PC-3 (cell line): ENCODE measurements at regions of chr13 and their contacts with region 1.

Region 1: DNA sequence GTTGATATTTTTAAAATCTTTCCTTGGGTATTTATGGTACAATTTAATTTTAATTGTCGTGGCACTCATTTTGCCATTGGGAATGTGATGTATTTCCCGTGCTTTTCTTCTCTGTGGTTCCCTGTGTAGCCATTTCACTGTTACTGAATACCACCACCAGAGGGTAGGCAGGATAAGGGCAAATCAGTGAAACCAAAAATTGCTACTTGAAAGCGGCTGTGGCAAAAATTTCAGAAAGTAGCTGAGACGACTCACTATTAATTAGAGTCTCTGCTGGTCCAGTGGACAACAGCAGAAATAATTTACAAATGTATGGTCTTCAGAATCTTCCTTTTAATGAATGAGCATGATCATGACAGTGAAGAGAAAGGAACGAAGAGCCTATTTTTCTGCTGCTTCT is 34.4 kb upstream of the MIR17HG start:
- DNase-seq: peak; percentile 22
- ATAC-seq: peak; percentile 49; the same call in 1 of the 2 replicates
- H3K4me3 ChIP-seq: no peak overlapping the region
- H3K27ac ChIP-seq: no peak overlapping the region
- H3K4me1 ChIP-seq: no peaks in the 10 kb centered on the region
- H3K27me3 ChIP-seq: peaks cover 55% of the 10 kb centered on the region
- CTCF ChIP-seq: peak; percentile 38; the same call in 1 of the 2 replicates

Region 2: DNA sequence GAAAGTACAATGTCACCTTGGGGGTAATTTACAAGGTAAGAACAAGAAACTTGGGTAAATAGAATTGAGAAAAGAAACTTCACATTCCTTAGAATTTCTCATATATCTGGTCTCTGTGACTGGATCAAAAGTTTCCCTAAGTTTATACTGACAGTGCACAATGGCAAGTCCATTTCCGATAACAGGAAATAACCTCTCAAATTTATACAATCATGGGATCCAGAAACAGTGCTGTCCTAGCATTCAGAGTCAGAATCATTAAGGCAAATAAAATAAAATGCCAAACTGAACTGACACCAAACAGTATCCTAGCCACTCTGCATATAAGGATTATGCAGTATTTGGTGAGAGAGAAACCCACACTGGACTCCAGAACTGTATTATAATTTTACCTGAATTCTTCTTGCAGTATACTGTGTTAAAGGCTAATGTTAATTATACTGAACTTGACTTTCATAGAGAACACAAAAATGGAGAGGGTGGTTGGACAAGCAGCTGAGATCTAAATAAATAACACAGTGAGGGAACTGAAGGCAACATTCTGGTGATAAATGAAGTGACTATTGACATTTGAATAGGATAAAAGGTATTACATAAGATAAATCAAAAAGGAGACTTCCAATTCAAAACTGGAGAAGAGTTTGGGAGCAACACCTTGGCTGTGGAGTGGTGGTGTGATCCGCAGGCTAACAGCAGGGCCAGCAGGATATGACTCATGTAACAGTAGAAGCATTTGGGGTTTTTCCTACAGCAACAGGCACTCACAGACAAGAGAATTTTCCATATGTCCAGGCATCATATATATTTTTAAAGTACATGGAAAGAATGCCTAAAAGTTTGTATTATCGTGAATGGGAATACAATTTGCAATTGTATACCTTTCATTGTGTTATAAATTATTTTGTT is 898.2 kb before region 1 on chr13:
- CTCF ChIA-PET with region 1: no interaction called
- POLR2A ChIA-PET with region 1: no interaction called
- intact Hi-C with region 1: no loop called
- DNase-seq: peak; percentile 47
- ATAC-seq: peak; percentile 97
- H3K4me3 ChIP-seq: no peak overlapping the region
- H3K27ac ChIP-seq: peak overlapping the region; percentile 45
- H3K4me1 ChIP-seq: peaks cover 16% of the 10 kb centered on the region
- H3K27me3 ChIP-seq: no peaks in the 10 kb centered on the region
- CTCF ChIP-seq: no peak

Region 3: GRCh38 chr13:91348906-91349435 is 35.9 kb after region 1 on chr13:
- CTCF ChIA-PET with region 1: no interaction called
- POLR2A ChIA-PET with region 1: no interaction called
- intact Hi-C with region 1: loop called (anchors 5 kb)
- DNase-seq: peak; percentile 83
- ATAC-seq: peak; percentile 50
- H3K4me3 ChIP-seq: peak overlapping the region; percentile 90
- H3K27ac ChIP-seq: peak overlapping the region; percentile 61
- H3K4me1 ChIP-seq: peaks cover 20% of the 10 kb centered on the region
- H3K27me3 ChIP-seq: peaks cover 27% of the 10 kb centered on the region
- CTCF ChIP-seq: peak; percentile 60

Region 4: GRCh38 chr13:91399273-91400086 is 86.4 kb after region 1 on chr13:
- CTCF ChIA-PET with region 1: no interaction called
- POLR2A ChIA-PET with region 1: no interaction called
- intact Hi-C with region 1: loop called (anchors 5 kb)
- DNase-seq: no peak
- ATAC-seq: no peak
- H3K4me3 ChIP-seq: no peak overlapping the region
- H3K27ac ChIP-seq: no peak overlapping the region
- H3K4me1 ChIP-seq: no peaks in the 10 kb centered on the region
- H3K27me3 ChIP-seq: peaks cover 39% of the 10 kb centered on the region
- CTCF ChIP-seq: no peak